GM12878 (cell line): ENCODE measurements at regions of chr2 and their contacts with region 1.

Region 1: GRCh38 chr2:136034629-136035028 is 49.2 kb upstream of the DARS1 start:
- DNase-seq: no peak
- ATAC-seq: peak; percentile 78
- H3K4me3 ChIP-seq: no peak overlapping the region
- H3K27ac ChIP-seq: no peak overlapping the region
- H3K4me1 ChIP-seq: peaks cover under 1% of the 10 kb centered on the region; the same call in 1 of the 2 replicates
- H3K27me3 ChIP-seq: 0 out of 4 replicates have a peak, but pooled peaks cover 0 to 2% of the 10 kb centered on the region in 2 experiments
- CTCF ChIP-seq: no peak
- EP300 ChIP-seq: no peak
- POLR2A ChIP-seq: no peak
- RAD21 ChIP-seq: no peak

Region 2: DNA sequence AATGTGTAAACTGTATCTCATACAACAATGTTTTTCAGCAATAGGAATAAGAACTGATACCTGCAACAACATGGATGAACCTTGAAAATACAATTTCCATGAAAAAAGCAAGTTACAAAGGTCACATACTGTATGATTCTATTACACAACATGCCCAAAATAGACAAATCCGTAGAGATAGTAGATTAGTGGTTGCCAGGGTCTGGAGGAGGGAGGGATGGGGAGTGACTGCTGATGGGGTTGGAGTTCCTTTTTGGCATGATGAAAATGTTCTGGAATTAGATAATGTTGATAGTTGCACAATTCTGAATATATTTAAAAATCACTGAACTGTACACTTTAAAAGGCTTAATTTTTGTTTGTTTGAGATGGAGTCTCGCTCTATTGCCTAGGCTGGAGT is 259.2 kb before region 1 on chr2:
- CTCF ChIA-PET with region 1: no interaction called
- POLR2A ChIA-PET with region 1: no interaction called
- RAD21 ChIA-PET with region 1: no interaction called
- SMC1A ChIA-PET with region 1: no interaction called
- in situ Hi-C with region 1: no loop called
- intact Hi-C with region 1: no loop called
- DNase-seq: no peak
- ATAC-seq: no peak
- H3K4me3 ChIP-seq: no peak overlapping the region
- H3K27ac ChIP-seq: no peak overlapping the region
- H3K4me1 ChIP-seq: no peaks in the 10 kb centered on the region
- H3K27me3 ChIP-seq: no peaks in the 10 kb centered on the region
- CTCF ChIP-seq: no peak
- EP300 ChIP-seq: no peak
- POLR2A ChIP-seq: no peak
- RAD21 ChIP-seq: no peak

Region 3: DNA sequence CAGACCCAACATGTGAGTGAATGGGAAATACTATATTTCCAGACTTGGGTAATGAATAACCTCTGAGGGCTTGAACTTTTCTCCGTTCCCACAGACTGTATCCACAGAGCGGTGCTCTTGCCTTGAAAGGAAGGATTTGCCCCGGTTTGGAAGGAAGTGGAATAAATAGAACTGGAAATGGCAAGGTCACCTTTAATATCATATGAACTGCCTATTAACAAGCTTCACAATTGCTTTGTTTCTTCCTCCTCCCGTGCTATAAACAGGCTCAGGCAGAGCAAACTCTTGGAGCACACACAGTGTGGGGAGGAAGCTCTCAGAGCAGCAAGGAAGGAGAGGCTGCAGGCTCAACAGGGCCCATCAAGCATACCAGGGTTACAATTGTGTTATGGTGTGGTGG is 20.7 kb before region 1 on chr2:
- CTCF ChIA-PET with region 1: interaction called, 29 read pairs
- POLR2A ChIA-PET with region 1: interaction called, 4 read pairs
- RAD21 ChIA-PET with region 1: interaction called, 50 read pairs
- SMC1A ChIA-PET with region 1: interaction called, 117 read pairs
- in situ Hi-C with region 1: no loop called
- intact Hi-C with region 1: no loop called
- DNase-seq: no peak
- ATAC-seq: no peak
- H3K4me3 ChIP-seq: no peak overlapping the region
- H3K27ac ChIP-seq: no peak overlapping the region
- H3K4me1 ChIP-seq: peaks cover 3% of the 10 kb centered on the region; the same call in 1 of the 2 replicates
- H3K27me3 ChIP-seq: no peaks in the 10 kb centered on the region
- CTCF ChIP-seq: no peak
- EP300 ChIP-seq: no peak
- POLR2A ChIP-seq: no peak
- RAD21 ChIP-seq: no peak

Region 4: DNA sequence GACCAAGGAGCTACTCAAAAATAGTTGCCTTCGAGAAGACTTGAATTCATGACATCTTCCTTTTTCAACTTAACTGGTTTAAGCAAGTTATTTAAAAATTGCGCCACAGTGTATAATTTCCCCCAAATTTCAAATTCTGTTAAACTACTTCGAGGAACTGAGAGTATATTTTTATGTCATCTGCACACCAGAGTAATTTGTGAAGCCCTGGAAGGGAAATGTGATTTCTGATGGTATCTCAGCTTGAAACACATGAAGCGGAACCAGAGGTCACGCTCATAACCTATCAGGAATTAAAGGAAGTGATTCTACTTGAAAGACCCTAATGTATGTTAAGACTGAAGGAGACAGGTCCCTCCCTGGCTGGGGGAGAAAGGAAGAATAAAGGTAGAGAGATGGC is 15.3 kb before region 1 on chr2:
- CTCF ChIA-PET with region 1: interaction called, 29 read pairs
- POLR2A ChIA-PET with region 1: interaction called, 6 read pairs
- RAD21 ChIA-PET with region 1: interaction called, 50 read pairs
- SMC1A ChIA-PET with region 1: interaction called, 117 read pairs
- in situ Hi-C with region 1: no loop called
- intact Hi-C with region 1: no loop called
- DNase-seq: peak; percentile 40
- ATAC-seq: peak; percentile 78
- H3K4me3 ChIP-seq: no peak overlapping the region
- H3K27ac ChIP-seq: no peak overlapping the region
- H3K4me1 ChIP-seq: peaks cover 8% of the 10 kb centered on the region
- H3K27me3 ChIP-seq: no peaks in the 10 kb centered on the region
- CTCF ChIP-seq: no peak
- EP300 ChIP-seq: peak; percentile 78 to 87; a peak in 2 of 4 replicates
- POLR2A ChIP-seq: no peak
- RAD21 ChIP-seq: 0 out of 2 replicates have a peak, but pooled peaks have one; percentile 6